ENCODE measurements at regions of chr10 and their contacts with region 1.

Region 1: GRCh38 chr10:119667562-119668328 is 16.6 kb downstream of the BAG3 start:
- DNase-seq: peak; percentile 88

Region 2: GRCh38 chr10:118950190-118950680 is 717.5 kb before region 1 on chr10:
- intact Hi-C with region 1: no loop called
- DNase-seq: no peak

Region 3: GRCh38 chr10:119596537-119597404 is 71.0 kb before region 1 on chr10 and contains the start of gene TIAL1:
- intact Hi-C with region 1: loop called (anchors 5 kb)
- DNase-seq: peak; percentile 99
- total RNA-seq, gene TIAL1: 75.0 TPM

Region 4: GRCh38 chr10:119650692-119651513 is 16.8 kb before region 1 on chr10 and contains the start of gene BAG3:
- intact Hi-C with region 1: loop called (anchors 2 kb)
- DNase-seq: peak; percentile 98
- total RNA-seq, gene BAG3: 172 TPM

Region 5: DNA sequence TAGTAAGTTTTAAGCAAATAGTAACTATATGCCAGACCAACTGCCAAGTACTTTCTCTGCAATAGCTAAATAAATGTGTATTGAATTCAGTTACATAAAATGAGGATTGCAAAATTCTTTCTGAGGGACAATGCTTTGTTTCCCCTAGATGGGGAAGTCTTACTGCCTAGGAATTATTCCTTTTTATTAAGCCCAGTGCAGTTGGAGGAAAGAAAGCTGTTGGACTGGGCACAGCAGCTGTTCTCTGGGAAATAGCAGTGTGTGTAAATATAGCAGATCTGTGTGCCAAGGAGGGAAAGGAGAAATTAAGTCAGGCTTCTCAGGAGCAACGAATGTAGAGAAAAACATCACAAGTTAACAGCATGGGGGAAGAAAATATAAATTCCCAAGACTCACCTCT is 301.9 kb after region 1 on chr10:
- intact Hi-C with region 1: no loop called
- DNase-seq: no peak

Region 6: GRCh38 chr10:120145107-120145506 is 477.4 kb after region 1 on chr10:
- intact Hi-C with region 1: no loop called
- DNase-seq: no peak